Transverse colon (tissue), 4 donors: ENCODE measurements at regions of chr16 and their contacts with region 1.

Region 1: DNA sequence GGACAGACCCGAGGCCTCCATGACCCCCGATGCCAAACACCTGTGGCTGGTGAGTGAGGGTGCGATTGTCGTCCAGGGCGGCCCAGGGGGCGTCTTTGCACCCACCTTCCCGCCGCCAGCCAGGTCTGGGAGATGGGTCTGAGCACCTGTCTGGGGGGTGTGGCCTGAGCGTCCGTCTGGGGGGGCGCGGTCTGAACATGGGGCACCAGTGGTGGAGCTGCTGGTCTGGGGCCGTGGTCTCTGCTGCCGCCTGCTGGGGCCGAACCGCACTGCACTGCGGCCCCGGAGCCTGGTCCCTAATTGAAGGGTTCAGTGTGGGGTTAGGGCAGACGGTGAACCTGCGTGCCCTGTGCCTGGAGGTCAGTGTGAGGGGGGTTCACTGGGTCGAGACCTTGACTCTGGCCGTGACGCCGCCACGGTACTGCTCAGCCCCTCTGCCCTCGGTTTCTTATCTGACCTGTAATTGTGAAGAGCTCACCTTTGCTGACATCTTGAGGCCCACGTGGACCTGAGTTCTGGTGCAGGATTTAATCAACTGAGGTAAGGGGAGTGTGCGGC is 12.6 kb upstream of the TCF25 start:
- DNase-seq: peak; percentile 78
- H3K4me3 ChIP-seq: no peak overlapping the region
- H3K27ac ChIP-seq: no peak overlapping the region
- H3K4me1 ChIP-seq: peaks cover 3 to 21% (median 18%) of the 10 kb centered on the region in 4 donors
- H3K27me3 ChIP-seq: no peaks in the 10 kb centered on the region
- CTCF ChIP-seq: peak; percentile 94 to 99 (median 98)
- EP300 ChIP-seq: no peak
- POLR2A ChIP-seq: no peak

Region 2: DNA sequence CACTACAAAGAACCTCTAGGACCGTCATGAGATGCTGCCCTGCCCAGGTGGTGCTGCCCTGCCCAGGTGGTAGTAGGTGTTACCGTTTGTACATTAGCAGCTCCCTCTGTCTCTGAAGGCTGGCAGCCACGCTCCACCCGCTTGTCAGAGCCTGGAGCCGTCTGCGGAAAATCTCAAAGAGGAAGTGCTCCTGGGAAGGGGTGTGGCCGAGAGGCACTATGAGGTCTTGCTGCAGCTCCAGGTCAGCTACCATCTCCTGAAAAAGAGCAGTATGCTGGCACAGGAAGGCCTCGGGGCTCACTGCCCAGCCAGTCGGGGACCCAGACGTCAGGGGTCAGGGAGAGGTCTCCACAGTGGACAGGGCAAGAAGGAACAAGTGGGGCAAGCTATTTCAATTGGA is 111.2 kb before region 1 on chr16:
- in situ Hi-C with region 1: no loop called
- intact Hi-C with region 1: loop called (anchors 2 kb)
- DNase-seq: peak; percentile 61
- H3K4me3 ChIP-seq: no peak overlapping the region
- H3K27ac ChIP-seq: no peak overlapping the region
- H3K4me1 ChIP-seq: peaks cover 0 to 7% (median 0%) of the 10 kb centered on the region in 4 donors
- H3K27me3 ChIP-seq: no peaks in the 10 kb centered on the region
- CTCF ChIP-seq: no peak
- EP300 ChIP-seq: no peak
- POLR2A ChIP-seq: no peak

Region 3: GRCh38 chr16:89805136-89805905 is 55.5 kb before region 1 on chr16:
- in situ Hi-C with region 1: no loop called
- intact Hi-C with region 1: no loop called
- DNase-seq: no peak
- H3K4me3 ChIP-seq: no peak overlapping the region
- H3K27ac ChIP-seq: peak overlapping the region in 1 of 4 donors; percentile 10
- H3K4me1 ChIP-seq: no peaks in the 10 kb centered on the region
- H3K27me3 ChIP-seq: no peaks in the 10 kb centered on the region
- CTCF ChIP-seq: no peak
- EP300 ChIP-seq: no peak
- POLR2A ChIP-seq: no peak

Region 4: DNA sequence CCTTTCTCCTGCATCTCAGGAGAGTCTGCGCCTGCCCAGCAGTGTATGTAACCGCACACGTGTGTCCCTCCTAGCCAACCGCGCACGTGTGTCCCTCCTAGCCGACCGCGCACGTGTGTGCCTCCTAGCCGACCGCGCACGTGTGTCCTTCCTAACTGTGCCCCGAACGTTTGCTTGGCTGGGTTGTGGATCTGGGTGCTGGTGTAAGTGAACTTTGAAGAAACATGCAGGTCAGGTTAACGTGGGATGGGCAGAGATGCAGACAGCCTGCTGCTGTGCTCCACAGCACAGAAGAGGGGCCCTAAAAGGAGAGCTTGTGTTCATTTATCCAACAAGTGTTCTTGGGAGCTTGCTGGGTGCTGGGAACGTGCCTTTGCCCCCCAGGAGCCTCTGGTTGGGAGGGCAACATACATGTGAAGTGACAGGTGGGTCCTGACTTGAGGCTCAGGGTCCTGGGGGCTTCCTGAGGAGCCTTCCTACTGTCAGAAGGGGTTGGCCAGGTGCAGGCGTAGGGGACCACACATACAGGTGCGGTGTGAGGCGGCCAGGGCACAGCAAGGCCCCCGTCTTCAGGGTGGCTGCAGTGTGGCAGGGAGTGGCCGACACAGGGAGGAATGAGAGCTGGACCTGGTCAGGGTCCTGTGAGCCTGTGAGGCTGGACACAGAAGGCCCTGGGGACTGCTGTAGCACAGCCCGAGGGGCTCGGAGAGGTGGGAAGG is 23.0 kb after region 1 on chr16:
- in situ Hi-C with region 1: no loop called
- intact Hi-C with region 1: loop called (anchors 1 kb)
- DNase-seq: no peak
- H3K4me3 ChIP-seq: no peak overlapping the region
- H3K27ac ChIP-seq: no peak overlapping the region
- H3K4me1 ChIP-seq: no peaks in the 10 kb centered on the region
- H3K27me3 ChIP-seq: no peaks in the 10 kb centered on the region
- CTCF ChIP-seq: no peak
- EP300 ChIP-seq: no peak
- POLR2A ChIP-seq: no peak

Region 5: DNA sequence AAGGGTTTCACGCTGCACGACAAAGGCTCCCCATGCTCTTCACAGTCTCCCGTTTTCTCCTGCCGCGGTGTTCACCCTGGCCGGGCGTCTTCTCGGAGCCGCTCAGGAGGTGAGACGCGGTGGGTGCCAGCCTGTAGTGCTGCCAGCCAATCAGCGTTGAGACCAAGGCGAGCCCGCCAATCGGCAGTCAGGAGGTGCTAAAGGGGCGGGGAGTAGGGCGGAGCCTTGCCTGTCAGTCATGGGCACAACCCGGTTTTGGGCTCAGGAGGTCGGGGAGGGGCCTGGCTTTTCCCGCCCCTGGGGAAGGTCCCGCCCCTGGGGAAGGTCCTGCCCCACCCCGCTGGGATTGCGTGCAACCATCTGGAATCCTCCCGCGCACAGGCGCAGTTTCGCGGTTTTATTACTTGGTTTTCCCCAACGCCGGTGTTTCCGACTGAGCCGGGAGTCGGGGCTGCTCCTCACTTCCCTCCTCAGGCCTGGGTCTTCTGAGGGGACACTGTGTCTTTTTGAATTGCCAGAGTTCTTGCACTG is 216.5 kb after region 1 on chr16 and contains the start of gene PRDM7:
- in situ Hi-C with region 1: no loop called
- intact Hi-C with region 1: no loop called
- DNase-seq: peak; percentile 95
- H3K4me3 ChIP-seq: peak within 1 kb of the TSS in 3 of 4 donors; percentile 23 to 52 (median 24)
- H3K27ac ChIP-seq: peak within 1 kb of the TSS; percentile 74 to 83 (median 76)
- H3K4me1 ChIP-seq: peaks cover 3 to 19% (median 13%) of the 10 kb centered on the region in 4 donors
- H3K27me3 ChIP-seq: peaks cover 8% of the 10 kb centered on the region
- CTCF ChIP-seq: no peak
- EP300 ChIP-seq: no peak
- POLR2A ChIP-seq: peak; percentile 16
- total RNA-seq, gene PRDM7: not detected